A673 (cell line): ENCODE measurements at regions of chr20 and their contacts with region 1.

Region 1: DNA sequence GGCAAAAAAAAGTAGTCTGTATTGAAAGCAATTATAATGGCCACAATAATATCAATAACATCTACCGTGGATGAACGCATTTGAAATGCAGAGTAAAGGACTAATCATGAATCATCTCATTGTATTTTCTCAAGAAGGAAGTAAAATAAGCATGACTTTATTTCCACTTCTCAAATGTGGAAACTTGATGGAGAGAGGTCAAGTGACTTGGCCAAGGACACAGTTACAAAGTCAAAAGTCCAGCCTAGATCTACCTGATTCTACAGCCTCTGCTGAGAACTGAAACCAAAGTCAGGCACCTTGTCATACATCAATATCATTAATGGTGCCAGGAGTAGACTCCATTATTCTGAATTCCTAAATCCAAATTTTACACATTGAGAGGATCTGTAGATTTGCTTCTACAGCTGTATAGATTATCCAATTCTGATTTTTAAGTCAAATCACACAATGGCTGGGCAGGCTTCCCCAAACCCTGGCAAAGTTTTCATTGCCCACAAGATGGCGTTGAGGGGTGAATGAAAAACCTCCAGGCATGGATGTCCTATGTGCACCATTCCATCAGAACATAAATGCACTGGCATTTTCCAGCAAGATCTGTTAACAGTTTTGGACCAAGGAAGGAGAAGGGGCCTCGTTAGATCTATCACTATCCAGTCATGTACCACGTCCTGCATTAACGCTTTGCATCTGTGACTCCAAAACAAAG is 423.1 kb downstream of the MAFB start:
- DNase-seq: peak; percentile 76
- H3K4me3 ChIP-seq: no peak overlapping the region
- H3K27ac ChIP-seq: no peak overlapping the region
- H3K4me1 ChIP-seq: no peaks in the 10 kb centered on the region
- H3K27me3 ChIP-seq: no peaks in the 10 kb centered on the region
- CTCF ChIP-seq: peak; percentile 79

Region 2: GRCh38 chr20:40463171-40463570 is 197.2 kb after region 1 on chr20:
- CTCF ChIA-PET with region 1: no interaction called
- POLR2A ChIA-PET with region 1: no interaction called
- intact Hi-C with region 1: loop called (anchors 10 kb)
- DNase-seq: no peak
- H3K4me3 ChIP-seq: no peak overlapping the region
- H3K27ac ChIP-seq: peak overlapping the region; percentile 33
- H3K4me1 ChIP-seq: peaks cover 20% of the 10 kb centered on the region
- H3K27me3 ChIP-seq: no peaks in the 10 kb centered on the region
- CTCF ChIP-seq: no peak